OCI-LY7 (cell line): ENCODE measurements at regions of chr22 and their contacts with region 1.

Region 1: DNA sequence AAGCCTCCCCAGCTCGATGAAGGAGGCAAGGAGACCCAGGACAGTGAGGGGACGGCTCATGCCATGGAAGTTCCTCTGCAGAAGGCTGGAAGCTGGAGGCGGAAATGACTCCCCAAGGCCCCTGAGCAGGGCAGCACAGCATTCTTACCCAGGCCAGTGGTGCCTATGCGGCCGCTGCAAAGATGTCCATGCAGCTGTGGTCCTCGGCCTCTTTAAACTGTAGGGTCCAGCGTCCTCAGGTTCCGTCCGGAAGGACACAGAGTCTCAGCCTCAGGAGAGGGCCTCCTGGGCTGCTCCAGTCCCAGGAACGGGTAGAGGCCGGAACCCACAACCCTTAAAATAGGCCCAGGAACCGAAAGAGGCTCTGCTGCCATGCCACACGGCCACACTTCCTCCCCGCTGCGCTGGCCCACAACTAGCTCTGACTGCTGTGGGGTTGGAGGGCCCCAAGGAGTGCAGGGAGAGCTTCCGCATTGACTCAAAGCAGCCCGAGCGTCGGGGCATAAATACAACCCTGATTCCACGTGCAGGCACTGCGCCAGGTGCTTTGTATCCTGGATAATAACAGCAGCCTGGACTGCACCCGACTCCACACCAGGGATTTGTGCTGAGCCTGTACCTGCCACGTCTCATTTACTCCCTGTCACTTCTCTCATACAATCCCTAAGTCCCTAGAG is 5.5 kb downstream of the KIAA0930 start:
- DNase-seq: peak; percentile 90
- H3K4me3 ChIP-seq: peak overlapping the region; percentile 61
- H3K27ac ChIP-seq: peak overlapping the region; percentile 91
- H3K4me1 ChIP-seq: peaks cover 80% of the 10 kb centered on the region
- CTCF ChIP-seq: no peak

Region 2: GRCh38 chr22:45163451-45164269 is 71.6 kb before region 1 on chr22 and contains the start of gene NUP50:
- CTCF ChIA-PET with region 1: no interaction called
- POLR2A ChIA-PET with region 1: interaction called, 4 read pairs
- intact Hi-C with region 1: loop called (anchors 10 kb)
- DNase-seq: peak; percentile 98
- H3K4me3 ChIP-seq: peak within 1 kb of the TSS; percentile 91
- H3K27ac ChIP-seq: peak within 1 kb of the TSS; percentile 79
- H3K4me1 ChIP-seq: peaks cover 39% of the 10 kb centered on the region
- CTCF ChIP-seq: no peak
- total RNA-seq, gene NUP50: 100 and 107 TPM in 2 replicates